ENCODE measurements at regions of chr12 and their contacts with region 1.

Region 1: DNA sequence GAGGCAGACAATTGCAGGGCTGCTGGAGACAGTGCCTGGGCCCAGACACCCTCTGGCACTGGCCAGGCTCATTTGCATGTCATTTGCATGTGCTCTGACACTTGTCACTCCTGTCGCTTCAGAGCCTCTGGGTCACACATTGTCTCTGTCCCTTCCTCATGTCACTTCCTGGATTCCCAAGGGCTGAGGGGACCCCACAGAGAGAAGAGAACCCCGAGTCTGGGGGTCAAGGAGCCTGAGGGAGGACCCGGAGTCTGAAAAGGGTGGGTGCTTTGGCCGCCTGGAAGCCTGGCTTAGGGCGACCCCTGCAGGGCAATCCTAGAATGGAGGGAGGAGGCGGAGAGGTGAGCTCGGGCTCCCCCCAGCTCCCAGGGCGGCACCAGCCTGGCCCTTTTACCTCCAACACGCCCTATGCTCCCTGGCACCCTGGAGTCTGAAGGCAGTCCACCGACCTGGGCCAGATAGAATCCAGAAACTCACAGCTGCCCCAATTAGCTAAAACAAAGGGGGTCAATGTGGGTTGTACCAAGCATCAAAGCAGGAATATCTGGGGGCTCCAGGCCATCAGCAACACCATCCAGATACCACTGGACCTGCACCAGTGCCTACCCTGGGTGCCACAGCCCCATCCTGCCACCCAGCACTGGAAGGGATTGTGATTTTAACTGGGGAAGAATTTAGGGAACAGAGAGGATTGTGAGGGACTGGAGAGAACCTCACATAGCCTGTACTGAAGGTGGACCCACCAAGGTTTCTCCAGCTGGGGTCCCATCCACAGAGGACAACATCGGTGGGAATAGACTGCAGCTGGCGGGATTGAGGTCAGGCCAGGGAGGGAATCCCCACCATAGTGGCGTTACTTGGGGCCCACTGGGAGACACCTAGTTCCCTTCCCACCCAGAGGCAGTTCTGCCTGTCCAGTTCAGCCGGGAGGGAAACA is 21.8 kb upstream of the KRT78 start:
- DNase-seq: peak; percentile 71 to 92 (median 81)
- ATAC-seq: peak; percentile 71
- H3K4me3 ChIP-seq: no peak overlapping the region
- H3K4me3 Mint-ChIP-seq: no peak overlapping the region
- H3K27ac ChIP-seq: peak overlapping the region; percentile 28 to 64
- H3K27ac Mint-ChIP-seq: peak overlapping the region; percentile 41
- H3K4me1 ChIP-seq: peaks cover 33% of the 10 kb centered on the region
- H3K4me1 Mint-ChIP-seq: peaks cover 33% of the 10 kb centered on the region
- H3K27me3 ChIP-seq: no peaks in the 10 kb centered on the region
- H3K27me3 Mint-ChIP-seq: no peaks in the 10 kb centered on the region
- CTCF ChIP-seq: peak; percentile 84

Region 2: GRCh38 chr12:52156736-52157565 is 713.7 kb before region 1 on chr12:
- CTCF ChIA-PET with region 1: no interaction called
- POLR2A ChIA-PET with region 1: no interaction called
- intact Hi-C with region 1: loop called in 1 of 2 experiments (anchors 5 kb)
- DNase-seq: peak; percentile 53 to 77 (median 73)
- ATAC-seq: peak; percentile 35
- H3K4me3 ChIP-seq: no peak overlapping the region
- H3K4me3 Mint-ChIP-seq: no peak overlapping the region
- H3K27ac ChIP-seq: no peak overlapping the region
- H3K27ac Mint-ChIP-seq: no peak overlapping the region
- H3K4me1 ChIP-seq: peaks cover 33% of the 10 kb centered on the region
- H3K4me1 Mint-ChIP-seq: peaks cover 22% of the 10 kb centered on the region
- H3K27me3 ChIP-seq: no peaks in the 10 kb centered on the region
- H3K27me3 Mint-ChIP-seq: no peaks in the 10 kb centered on the region
- CTCF ChIP-seq: peak; percentile 66

Region 3: DNA sequence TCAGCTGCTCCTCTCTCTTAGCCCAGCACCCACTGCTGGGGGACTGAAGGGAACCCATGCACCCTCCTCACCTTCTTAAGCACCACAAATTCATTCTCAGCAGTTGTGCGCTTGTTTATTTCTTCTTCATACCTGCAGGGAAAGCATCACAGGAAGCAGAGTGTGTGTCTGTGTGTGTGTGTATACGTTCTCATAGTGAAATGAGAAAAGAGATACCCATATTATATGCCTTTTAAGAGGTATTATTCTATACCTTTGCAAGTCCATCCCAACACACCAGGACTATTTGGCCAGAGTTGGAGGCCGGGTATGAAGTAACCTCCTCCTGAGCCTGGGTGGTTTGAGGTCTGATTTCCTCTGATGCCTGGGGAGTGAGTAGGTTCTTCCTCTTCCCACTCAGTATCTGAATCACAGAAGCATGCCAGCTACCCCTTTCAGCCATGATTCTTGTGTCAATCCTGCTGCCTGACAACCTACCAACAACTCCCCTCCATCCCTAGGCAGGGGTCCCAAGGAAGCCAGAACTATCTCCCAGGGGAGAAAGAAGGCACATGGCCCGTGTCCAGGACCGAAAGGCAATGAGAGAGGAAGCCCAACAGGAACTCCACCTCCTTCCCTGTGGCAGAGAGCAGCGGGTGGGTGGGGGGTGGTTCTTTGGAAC is 255.3 kb before region 1 on chr12:
- CTCF ChIA-PET with region 1: interaction called, 22 read pairs
- POLR2A ChIA-PET with region 1: interaction called, 5 read pairs
- intact Hi-C with region 1: loop called (anchors 1 kb)
- DNase-seq: peak in 3 of 9 experiments; percentile 35 to 61 (median 48)
- ATAC-seq: peak; percentile 45
- H3K4me3 ChIP-seq: no peak overlapping the region
- H3K4me3 Mint-ChIP-seq: peak overlapping the region; percentile 53
- H3K27ac ChIP-seq: peak overlapping the region; percentile 58 to 60
- H3K27ac Mint-ChIP-seq: peak overlapping the region; percentile 95
- H3K4me1 ChIP-seq: peaks cover 88% of the 10 kb centered on the region
- H3K4me1 Mint-ChIP-seq: peaks cover 82% of the 10 kb centered on the region
- H3K27me3 ChIP-seq: no peaks in the 10 kb centered on the region
- H3K27me3 Mint-ChIP-seq: no peaks in the 10 kb centered on the region
- CTCF ChIP-seq: no peak

Region 4: GRCh38 chr12:52691076-52691840 is 179.4 kb before region 1 on chr12:
- CTCF ChIA-PET with region 1: no interaction called
- POLR2A ChIA-PET with region 1: interaction called, 3 read pairs
- intact Hi-C with region 1: loop called (anchors 5 to 10 kb)
- DNase-seq: peak; percentile 22 to 78 (median 65)
- ATAC-seq: peak; percentile 84
- H3K4me3 ChIP-seq: peak overlapping the region; percentile 44 to 47
- H3K4me3 Mint-ChIP-seq: peak overlapping the region; percentile 84
- H3K27ac ChIP-seq: no peak overlapping the region
- H3K27ac Mint-ChIP-seq: peak overlapping the region; percentile 89
- H3K4me1 ChIP-seq: peaks cover 19% of the 10 kb centered on the region
- H3K4me1 Mint-ChIP-seq: peaks cover 42% of the 10 kb centered on the region
- H3K27me3 ChIP-seq: no peaks in the 10 kb centered on the region
- H3K27me3 Mint-ChIP-seq: no peaks in the 10 kb centered on the region
- CTCF ChIP-seq: no peak

Measured in CD8-positive, alpha-beta T cell (primary cell).